AG04450 (cell line): ENCODE measurements at regions of chr18 and their contacts with region 1.

Region 1: DNA sequence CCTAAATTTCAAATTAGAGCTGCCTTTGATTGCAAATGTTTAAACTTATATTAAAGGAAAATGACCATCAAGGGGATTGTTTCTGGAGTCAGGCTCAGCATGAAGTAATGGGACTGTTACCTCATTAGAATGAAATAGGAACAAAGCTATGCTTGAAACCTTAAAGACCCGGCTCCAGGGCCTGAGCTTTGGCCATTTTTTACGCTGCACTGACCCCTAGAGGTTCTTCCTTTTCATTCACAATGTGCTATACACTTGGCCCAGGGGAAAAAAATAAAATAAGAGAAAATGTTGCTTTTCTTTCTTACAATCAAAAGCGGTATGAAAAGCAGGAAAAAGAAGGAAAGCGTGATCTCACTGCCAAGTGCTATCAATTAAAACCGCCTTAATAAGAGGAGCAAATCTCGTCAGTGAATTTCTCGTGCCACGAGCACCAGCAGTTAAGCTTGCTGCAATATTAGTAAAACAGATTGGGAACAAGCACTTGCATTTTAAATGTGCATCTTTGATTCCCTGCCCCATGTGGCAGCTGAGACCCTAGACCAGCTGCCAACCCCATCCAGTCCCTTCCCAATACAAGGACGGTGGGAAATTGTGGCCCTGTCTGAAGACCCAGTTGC is 96.6 kb downstream of the MBD2 start:
- DNase-seq: peak; percentile 8
- H3K4me3 ChIP-seq: no peak overlapping the region
- H3K27ac ChIP-seq: no peak overlapping the region
- H3K27me3 ChIP-seq: no peaks in the 10 kb centered on the region
- CTCF ChIP-seq: peak; percentile 68

Region 2: GRCh38 chr18:52716973-52717372 is 1410.9 kb before region 1 on chr18:
- CTCF ChIA-PET with region 1: interaction called, 11 read pairs
- POLR2A ChIA-PET with region 1: no interaction called
- DNase-seq: no peak
- H3K4me3 ChIP-seq: no peak overlapping the region
- H3K27ac ChIP-seq: no peak overlapping the region
- H3K27me3 ChIP-seq: no peaks in the 10 kb centered on the region
- CTCF ChIP-seq: peak; percentile 44

Region 3: GRCh38 chr18:54232485-54233227 is 104.8 kb after region 1 on chr18:
- CTCF ChIA-PET with region 1: no interaction called
- POLR2A ChIA-PET with region 1: no interaction called
- DNase-seq: no peak
- H3K4me3 ChIP-seq: no peak overlapping the region
- H3K27ac ChIP-seq: no peak overlapping the region
- H3K27me3 ChIP-seq: no peaks in the 10 kb centered on the region
- CTCF ChIP-seq: no peak

Region 4: GRCh38 chr18:55465313-55465712 is 1337.4 kb after region 1 on chr18:
- CTCF ChIA-PET with region 1: no interaction called
- POLR2A ChIA-PET with region 1: no interaction called
- DNase-seq: no peak
- H3K4me3 ChIP-seq: no peak overlapping the region
- H3K27ac ChIP-seq: no peak overlapping the region
- H3K27me3 ChIP-seq: no peaks in the 10 kb centered on the region
- CTCF ChIP-seq: no peak